ENCODE measurements at regions of chr22 and their contacts with region 1.

Region 1: GRCh38 chr22:29617922-29618629 is 14.6 kb downstream of the NF2 start:
- DNase-seq: no peak
- H3K4me3 ChIP-seq: no peak overlapping the region
- H3K27ac ChIP-seq: no peak overlapping the region
- H3K4me1 ChIP-seq: peaks cover 7% of the 10 kb centered on the region
- CTCF ChIP-seq: no peak

Region 2: DNA sequence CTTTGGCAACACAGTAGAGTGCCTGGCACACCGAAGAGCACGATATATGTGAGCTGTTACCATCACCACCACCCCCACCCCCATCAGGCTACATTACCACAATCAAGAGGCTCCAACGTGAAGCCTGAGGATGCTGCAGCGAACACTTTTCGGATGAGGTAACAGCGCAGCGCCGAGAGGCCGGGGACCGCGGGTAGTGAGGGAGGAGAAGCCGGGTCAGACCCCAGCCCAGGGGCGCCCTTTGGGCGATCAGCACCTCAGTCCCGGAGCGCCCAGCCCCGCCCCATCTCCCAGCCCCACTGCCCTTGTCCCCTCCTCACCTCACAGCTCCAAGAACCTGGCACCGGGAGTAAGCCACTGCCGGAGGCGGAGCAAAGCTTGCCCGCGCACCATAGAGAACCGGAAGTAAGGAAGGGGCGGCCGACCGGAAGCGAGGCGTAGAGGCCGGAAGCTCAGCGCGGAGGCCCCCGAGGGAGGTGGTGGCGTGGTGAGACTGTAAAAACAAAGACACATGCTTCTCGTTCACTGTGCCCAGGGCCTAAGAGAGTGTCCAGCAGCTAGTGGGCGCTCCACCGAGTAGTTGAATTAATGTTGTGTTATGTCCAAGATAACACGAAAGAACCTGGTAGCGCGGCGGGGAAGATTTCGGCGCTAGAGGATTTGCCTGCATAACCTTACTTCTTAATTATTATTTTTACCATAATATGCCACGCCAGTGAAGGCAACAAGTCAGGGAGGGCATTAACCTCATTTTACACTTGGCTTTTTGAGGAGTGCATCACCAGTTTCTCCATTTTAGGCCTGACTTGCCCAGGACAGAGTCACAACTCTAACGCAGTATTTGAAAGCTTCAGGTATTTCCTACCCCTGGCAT is 64.5 kb before region 1 on chr22 and contains the start of gene THOC5:
- CTCF ChIA-PET with region 1: no interaction called
- POLR2A ChIA-PET with region 1: no interaction called
- intact Hi-C with region 1: loop called (anchors 10 kb)
- DNase-seq: peak; percentile 93
- H3K4me3 ChIP-seq: peak within 1 kb of the TSS; percentile 91
- H3K27ac ChIP-seq: peak within 1 kb of the TSS; percentile 46
- H3K4me1 ChIP-seq: peaks cover 6% of the 10 kb centered on the region
- CTCF ChIP-seq: peak; percentile 74
- total RNA-seq, gene THOC5: 35.9 and 38.5 TPM in 2 replicates